ENCODE measurements at regions of chr14 and their contacts with region 1.

Region 1: DNA sequence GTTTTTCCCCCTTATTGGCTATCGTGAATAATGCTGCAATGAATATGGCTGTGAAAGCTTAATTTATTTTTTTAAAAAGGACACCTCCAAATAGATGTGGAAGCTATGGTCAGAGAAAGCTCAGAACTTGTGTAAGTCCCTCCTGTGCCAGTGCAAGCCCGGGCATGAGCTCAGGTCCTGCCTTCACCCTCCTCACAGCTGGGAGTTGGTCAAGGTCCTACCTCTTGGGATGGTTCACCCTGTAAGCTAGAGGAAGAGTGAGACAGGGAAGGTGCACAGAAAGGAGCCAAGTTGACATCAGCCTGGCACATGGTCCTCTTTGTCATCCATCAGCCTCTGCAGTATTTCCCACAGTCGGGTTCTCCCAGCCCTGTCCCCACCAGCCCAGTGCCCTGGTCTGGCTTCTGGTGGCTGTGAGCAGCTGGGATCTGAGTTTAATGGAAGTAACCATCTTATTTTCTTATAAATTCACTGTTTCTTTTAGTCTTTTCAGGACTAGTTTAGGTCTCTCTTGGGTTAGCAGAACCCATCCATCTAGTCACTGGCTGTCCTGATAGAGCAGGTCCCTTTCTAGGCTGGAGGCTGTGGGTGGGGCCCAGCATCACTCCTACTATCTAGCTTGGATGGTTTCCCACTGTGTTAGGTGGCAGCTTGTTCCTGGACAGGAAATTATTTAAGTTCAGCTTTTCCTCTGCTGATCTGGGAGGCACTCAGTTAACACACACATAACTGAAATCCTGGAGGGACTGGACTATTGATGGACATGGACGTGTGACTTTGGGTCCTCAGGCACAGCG is 11.8 kb upstream of the PLEKHG3 start:
- DNase-seq: peak in 1 of 2 donors; percentile 11
- H3K4me3 ChIP-seq: no peak overlapping the region
- H3K27ac ChIP-seq: no peak overlapping the region
- H3K4me1 ChIP-seq: no peaks in the 10 kb centered on the region
- H3K27me3 ChIP-seq: no peaks in the 10 kb centered on the region
- CTCF ChIP-seq: no peak
- POLR2A ChIP-seq: no peak

Region 2: DNA sequence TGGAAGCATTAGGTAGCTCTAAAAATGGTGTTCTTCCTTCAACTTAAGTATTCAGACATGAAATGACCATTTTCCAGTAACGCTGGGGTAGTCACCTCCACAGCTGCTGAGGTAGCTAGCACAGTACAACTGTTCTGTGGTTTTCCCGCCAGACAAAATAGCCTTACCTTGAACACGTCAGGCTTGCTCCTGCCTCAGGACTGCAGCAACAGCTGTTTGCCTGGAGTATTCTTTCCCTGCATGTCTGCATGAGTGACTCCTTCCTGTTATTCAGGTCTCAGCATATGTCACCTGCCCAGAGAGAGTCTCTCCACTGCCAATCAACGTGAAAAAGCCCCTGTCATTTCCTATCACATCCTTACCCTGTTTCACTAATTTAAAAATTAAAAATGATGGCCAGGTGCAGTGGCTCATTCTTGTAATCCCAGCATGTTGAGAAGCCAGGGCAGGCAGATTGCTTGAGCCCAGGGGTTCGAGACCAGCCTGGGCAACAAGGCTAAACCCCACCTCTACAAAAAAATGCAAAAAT is 1088.6 kb before region 1 on chr14:
- intact Hi-C with region 1: loop called (anchors 5 kb)
- DNase-seq: no peak
- H3K4me3 ChIP-seq: no peak overlapping the region
- H3K27ac ChIP-seq: no peak overlapping the region
- H3K4me1 ChIP-seq: no peaks in the 10 kb centered on the region
- H3K27me3 ChIP-seq: no peaks in the 10 kb centered on the region
- CTCF ChIP-seq: no peak
- POLR2A ChIP-seq: no peak

Region 3: DNA sequence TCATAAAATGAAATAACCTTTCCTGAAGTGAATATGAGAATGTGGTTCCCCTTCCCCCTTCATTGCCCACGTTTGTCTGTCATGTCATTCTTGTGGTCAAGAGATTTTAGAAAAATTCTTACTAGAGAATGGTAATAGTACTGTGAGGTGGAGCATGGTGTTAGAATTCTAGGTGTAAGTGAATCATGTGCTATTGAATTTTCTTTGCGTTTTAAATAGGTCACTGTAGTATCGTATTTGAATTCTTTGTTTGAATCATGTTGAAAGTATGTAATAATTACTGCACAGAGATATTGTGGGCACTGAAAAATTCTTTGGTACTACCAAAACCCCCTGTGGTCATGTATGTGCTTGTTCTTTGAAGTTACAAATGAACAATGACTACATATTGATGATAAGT is 770.0 kb after region 1 on chr14:
- intact Hi-C with region 1: no loop called
- DNase-seq: no peak
- H3K4me3 ChIP-seq: no peak overlapping the region
- H3K27ac ChIP-seq: no peak overlapping the region
- H3K4me1 ChIP-seq: no peaks in the 10 kb centered on the region
- H3K27me3 ChIP-seq: no peaks in the 10 kb centered on the region
- CTCF ChIP-seq: no peak
- POLR2A ChIP-seq: no peak

Measured in breast epithelium (tissue), 4 donors.